Pancreas (tissue), 10 donors: ENCODE measurements at regions of chr16 and their contacts with region 1.

Region 1: DNA sequence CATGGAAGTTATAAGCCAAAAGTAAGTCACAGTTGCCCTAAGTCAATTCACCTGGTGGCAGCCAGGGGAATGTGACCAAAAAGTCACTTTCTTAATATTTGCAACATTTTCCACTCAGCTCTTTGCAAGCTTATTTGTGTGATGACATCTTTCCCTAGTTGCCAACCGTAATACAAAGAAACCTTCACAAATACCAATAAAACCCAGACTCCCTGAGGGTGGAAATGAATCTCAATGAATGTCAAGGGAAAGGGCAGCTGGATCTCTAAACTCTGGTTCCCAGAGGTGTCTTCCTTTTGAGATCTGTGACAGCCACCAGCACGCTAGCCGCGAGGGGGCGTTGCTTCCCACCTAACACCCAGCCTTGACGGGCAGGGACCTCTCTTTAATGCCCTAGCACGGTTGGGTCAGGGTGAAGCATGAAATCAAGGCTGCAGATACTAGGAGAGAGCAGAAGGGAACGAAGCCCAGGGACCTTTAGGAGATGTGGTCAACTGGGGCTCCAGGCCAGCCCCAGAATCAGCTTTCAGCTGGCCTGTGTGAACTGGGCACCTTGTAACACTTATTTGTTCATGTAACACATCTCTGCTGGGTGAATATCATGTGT is 82.2 kb downstream of the CMC2 start:
- DNase-seq: peak in 4 of 6 donors; percentile 21 to 73 (median 32)
- ATAC-seq: peak in 3 of 4 donors; percentile 69 to 92 (median 70)
- H3K4me3 ChIP-seq: no peak overlapping the region
- H3K27ac ChIP-seq: no peak overlapping the region
- H3K4me1 ChIP-seq: no peaks in the 10 kb centered on the region
- H3K27me3 ChIP-seq: no peaks in the 10 kb centered on the region
- CTCF ChIP-seq: peak in 3 of 4 donors; percentile 9 to 16 (median 13)

Region 2: GRCh38 chr16:80862160-80862705 is 62.2 kb before region 1 on chr16:
- intact Hi-C with region 1: no loop called
- DNase-seq: no peak
- ATAC-seq: peak in 3 of 4 donors; percentile 60 to 92 (median 62)
- H3K4me3 ChIP-seq: peak overlapping the region in 1 of 4 donors; percentile 15
- H3K27ac ChIP-seq: no peak overlapping the region
- H3K4me1 ChIP-seq: peaks cover 0 to 3% (median 0%) of the 10 kb centered on the region in 3 donors
- H3K27me3 ChIP-seq: no peaks in the 10 kb centered on the region
- CTCF ChIP-seq: no peak

Region 3: GRCh38 chr16:81035398-81035974 is 111.0 kb after region 1 on chr16 and contains the start of gene ATMIN:
- intact Hi-C with region 1: loop called in 1 of 3 experiments (anchors 10 kb)
- DNase-seq: peak; percentile 90 to 98 (median 95)
- ATAC-seq: peak; percentile 97 to 99 (median 99)
- H3K4me3 ChIP-seq: peak within 1 kb of the TSS; percentile 53 to 81 (median 78)
- H3K27ac ChIP-seq: peak within 1 kb of the TSS in 3 of 4 donors; percentile 51 to 73 (median 60)
- H3K4me1 ChIP-seq: peaks cover 3 to 8% (median 4%) of the 10 kb centered on the region in 3 donors
- H3K27me3 ChIP-seq: no peaks in the 10 kb centered on the region
- CTCF ChIP-seq: peak; percentile 97 to 99 (median 98)
- total RNA-seq, gene ATMIN: 10.4 to 18.8 (median 14.8) TPM